Upper lobe of right lung (tissue), 1 donor: ENCODE measurements at regions of chr1 and their contacts with region 1.

Region 1: DNA sequence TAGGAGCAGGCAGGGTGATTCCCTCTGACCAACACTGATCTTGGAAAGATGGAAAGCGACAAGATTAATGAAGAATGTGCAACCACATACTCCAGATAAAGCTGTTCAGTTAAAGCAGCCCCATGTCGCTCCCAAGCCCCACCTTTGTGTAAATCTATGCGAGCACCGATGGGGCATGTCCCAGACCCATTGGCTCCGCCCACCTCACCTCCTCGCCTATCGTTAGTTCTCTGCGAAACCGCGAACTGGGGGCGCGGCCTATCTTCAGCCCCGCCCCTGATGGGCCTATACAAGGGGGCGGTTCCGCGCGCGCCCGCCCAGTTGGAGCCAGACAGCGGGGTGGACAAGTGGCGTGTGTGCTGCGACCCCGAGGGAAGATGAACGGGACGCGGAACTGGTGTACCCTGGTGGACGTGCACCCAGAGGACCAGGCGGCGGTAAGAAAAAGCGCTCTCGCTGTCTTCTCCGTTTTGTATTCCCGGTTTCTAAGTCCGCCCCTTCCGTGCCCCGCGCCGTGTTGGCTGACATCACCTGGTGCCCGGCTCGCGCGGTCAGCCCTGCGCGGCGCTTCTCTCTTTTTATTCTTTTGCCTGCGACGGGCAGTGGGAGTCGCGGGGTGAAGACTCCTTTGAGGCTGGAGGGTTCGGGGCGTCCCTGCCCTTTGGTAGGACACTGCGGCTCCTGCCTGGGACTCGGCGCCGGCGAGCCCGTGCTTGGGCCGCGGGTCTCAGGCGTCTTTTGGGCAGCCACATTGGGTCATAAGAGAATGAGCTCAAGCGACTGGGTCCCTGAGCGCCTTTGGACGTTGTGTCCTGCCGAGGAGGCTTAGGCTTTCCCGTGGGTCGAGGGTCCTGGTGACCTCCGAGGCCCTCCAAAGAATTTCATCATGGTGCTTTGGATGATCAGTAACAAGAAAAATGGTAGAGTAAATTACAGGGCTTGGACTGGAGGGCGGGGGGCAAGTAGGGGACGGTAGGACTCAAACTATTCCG is at the start of gene TUFT1:
- DNase-seq: peak; percentile 98
- ATAC-seq: peak; percentile 96
- H3K4me3 ChIP-seq: peak within 1 kb of the TSS; percentile 78
- H3K27ac ChIP-seq: peak within 1 kb of the TSS; percentile 77
- H3K4me1 ChIP-seq: peaks cover 9% of the 10 kb centered on the region
- H3K27me3 ChIP-seq: no peaks in the 10 kb centered on the region
- CTCF ChIP-seq: no peak
- total RNA-seq, gene TUFT1: 13.3 TPM

Region 2: GRCh38 chr1:151435160-151435559 is 105.1 kb before region 1 on chr1:
- intact Hi-C with region 1: loop called (anchors 10 kb)
- DNase-seq: no peak
- ATAC-seq: no peak
- H3K4me3 ChIP-seq: no peak overlapping the region
- H3K27ac ChIP-seq: no peak overlapping the region
- H3K4me1 ChIP-seq: peaks cover 22% of the 10 kb centered on the region
- H3K27me3 ChIP-seq: no peaks in the 10 kb centered on the region
- CTCF ChIP-seq: no peak